MCF 10A (cell line): ENCODE measurements at regions of chr10 and their contacts with region 1.

Region 1: DNA sequence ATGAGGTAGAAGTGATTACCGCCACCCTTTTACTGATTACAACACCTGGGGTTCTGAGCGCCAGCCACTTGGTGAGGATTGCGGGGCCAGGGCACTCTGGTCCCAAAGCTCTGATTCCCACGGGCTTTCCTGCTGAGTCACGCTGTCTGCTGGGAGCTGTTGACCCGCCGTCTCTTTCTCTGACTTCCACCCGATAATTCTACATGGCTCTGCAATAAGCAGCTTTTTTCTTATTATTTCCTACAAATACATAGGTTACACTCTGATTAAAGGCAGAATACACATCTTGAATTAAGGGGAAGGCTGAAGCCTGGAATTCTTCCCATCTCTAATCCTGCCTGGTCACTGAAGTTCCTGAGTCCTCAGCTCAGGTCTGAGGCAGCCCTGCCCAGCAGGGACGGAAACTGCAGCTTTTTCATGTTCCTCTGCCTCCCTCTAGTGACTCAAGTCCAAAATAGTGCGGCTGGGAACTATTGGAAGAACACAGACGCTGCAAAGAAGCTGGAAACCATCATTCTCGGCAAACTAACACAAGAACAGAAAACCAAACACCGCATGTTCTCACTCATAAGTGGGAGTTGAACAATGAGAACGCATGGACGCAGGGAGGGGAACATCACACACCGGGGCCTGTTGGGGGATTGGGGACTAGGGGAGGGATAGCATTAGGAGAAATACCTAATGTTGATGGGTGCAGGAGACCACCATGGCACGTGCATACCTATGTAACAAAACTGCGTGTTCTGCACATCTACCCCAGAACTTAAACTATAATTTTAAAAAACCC is 178.3 kb downstream of the PRKCQ start:
- DNase-seq: peak; percentile 90
- H3K4me3 Mint-ChIP-seq: peak overlapping the region; percentile 73
- H3K27ac Mint-ChIP-seq: peak overlapping the region; percentile 63
- H3K4me1 Mint-ChIP-seq: peaks cover 25% of the 10 kb centered on the region
- H3K27me3 Mint-ChIP-seq: peaks cover 30% of the 10 kb centered on the region
- CTCF ChIP-seq: peak; percentile 72

Region 2: DNA sequence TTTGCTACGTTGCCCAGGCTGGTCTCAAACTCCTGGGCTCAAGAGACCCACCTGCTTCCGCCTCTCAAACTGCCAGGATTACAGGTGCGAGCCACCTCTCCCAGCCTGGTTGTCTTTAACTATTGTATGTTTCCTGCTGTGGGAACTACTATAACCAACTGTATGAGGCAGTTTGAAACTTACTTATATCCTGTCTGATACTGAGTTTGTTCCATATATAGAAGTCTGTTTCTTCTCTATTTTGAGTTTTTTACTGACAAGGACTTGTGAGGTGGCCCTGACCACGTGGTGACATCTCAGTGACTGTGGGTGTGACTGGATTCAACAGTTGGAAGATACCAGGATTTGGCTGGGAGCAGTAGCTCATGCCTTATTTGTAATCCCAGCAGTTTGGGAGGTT is 497.5 kb before region 1 on chr10:
- CTCF ChIA-PET with region 1: no interaction called
- POLR2A ChIA-PET with region 1: no interaction called
- intact Hi-C with region 1: no loop called
- DNase-seq: no peak
- H3K4me3 Mint-ChIP-seq: no peak overlapping the region
- H3K27ac Mint-ChIP-seq: no peak overlapping the region
- H3K4me1 Mint-ChIP-seq: peaks cover 5% of the 10 kb centered on the region
- H3K27me3 Mint-ChIP-seq: no peaks in the 10 kb centered on the region
- CTCF ChIP-seq: no peak

Region 3: DNA sequence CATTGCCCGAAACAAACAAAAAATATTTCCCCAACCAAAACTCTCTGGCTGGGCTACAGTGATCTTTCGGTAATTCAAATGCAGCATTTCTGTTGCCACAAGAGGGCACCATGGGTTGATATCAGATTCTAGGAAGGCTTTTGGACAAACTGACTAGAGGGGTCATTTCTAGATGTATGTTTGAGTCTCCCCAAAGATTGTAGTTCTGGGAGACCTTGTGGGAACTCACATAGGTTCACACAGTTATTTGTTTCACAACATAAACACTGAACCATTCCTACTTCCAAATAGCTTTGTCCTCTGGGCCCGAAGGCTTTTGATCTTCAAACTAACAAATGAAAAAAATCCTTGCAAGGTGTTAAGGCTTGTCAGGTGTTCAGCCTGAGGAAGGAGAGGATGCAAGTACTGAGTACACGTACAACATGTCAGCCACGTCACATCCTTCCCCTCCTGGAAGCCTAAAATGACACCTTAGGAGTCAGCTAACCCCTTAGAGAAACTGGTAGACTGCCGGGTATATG is 387.5 kb before region 1 on chr10:
- CTCF ChIA-PET with region 1: interaction called, 10 read pairs
- POLR2A ChIA-PET with region 1: no interaction called
- intact Hi-C with region 1: loop called (anchors 1 kb)
- DNase-seq: peak; percentile 64
- H3K4me3 Mint-ChIP-seq: no peak overlapping the region
- H3K27ac Mint-ChIP-seq: no peak overlapping the region
- H3K4me1 Mint-ChIP-seq: no peaks in the 10 kb centered on the region
- H3K27me3 Mint-ChIP-seq: peaks cover 11% of the 10 kb centered on the region
- CTCF ChIP-seq: peak; percentile 58

Region 4: DNA sequence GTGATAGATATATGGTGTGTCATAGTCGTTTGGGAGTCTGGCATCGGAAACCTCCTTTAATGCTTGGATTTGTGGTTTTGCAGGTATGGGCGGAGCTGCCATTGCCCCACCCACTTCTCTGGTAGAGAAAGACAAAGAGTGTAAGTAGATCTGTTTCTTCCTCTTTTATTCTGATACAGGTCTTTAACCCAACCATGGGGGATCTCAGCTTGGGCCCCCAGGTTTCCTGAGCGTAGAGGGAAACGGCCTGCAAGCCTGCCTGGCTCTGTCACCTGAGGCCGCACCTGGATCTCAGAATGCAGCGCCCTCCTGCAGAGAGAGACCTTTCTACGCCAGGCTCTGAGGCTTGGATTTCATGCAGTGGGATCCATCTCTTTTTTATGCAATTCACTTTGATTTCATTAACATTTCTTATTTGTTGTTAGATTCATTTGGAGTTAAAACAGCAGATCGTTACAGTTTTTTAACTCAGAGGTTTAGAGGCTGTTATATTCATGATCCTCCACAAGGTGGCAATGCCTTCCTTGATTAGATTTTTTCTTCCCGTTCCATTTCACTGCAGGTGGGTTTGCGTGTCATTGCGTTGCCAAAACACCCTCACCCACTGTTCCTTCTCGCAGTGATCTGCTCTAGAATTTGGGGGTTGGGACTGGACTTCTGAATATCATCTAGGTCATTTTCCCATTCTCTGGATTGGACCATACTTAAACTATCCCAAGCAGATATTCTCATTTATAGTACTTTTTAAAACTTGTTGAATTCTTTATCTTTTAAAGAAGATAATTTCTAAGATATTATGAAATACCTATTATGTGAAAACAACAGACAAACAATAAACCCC is 292.9 kb before region 1 on chr10:
- CTCF ChIA-PET with region 1: interaction called, 80 read pairs
- POLR2A ChIA-PET with region 1: interaction called, 5 read pairs
- intact Hi-C with region 1: loop called (anchors 1 kb)
- DNase-seq: peak; percentile 51
- H3K4me3 Mint-ChIP-seq: no peak overlapping the region
- H3K27ac Mint-ChIP-seq: no peak overlapping the region
- H3K4me1 Mint-ChIP-seq: peaks cover 11% of the 10 kb centered on the region
- H3K27me3 Mint-ChIP-seq: no peaks in the 10 kb centered on the region
- CTCF ChIP-seq: peak; percentile 76

Region 5: DNA sequence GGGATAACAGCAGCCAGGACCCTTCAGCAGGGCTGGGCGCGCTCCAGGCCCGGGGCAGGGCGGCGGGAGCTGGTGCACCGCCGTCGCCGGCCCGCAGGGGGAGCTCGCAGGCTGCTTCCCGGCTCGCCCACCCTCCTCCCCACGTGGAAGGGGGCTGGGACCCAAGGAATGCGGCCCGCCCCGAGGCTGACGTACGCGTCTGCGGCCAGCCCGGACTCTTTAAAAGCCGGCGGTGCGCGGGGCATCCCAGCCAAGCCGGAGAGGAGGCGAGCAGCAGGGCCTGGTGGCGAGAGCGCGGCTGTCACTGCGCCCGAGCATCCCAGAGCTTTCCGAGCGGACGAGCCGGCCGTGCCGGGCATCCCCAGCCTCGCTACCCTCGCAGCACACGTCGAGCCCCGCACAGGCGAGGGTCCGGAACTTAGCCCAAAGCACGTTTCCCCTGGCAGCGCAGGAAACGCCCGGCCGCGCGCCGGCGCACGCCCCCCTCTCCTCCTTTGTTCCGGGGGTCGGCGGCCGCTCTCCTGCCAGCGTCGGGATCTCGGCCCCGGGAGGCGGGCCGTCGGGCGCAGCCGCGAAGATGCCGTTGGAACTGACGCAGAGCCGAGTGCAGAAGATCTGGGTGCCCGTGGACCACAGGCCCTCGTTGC is 198.9 kb before region 1 on chr10 and contains the start of gene PFKFB3:
- CTCF ChIA-PET with region 1: interaction called, 114 read pairs
- POLR2A ChIA-PET with region 1: interaction called, 100 read pairs
- intact Hi-C with region 1: loop called (anchors 1 kb)
- DNase-seq: peak; percentile 94
- H3K4me3 Mint-ChIP-seq: peak within 1 kb of the TSS; percentile 94
- H3K27ac Mint-ChIP-seq: no peak within 1 kb of the TSS
- H3K4me1 Mint-ChIP-seq: peaks cover 19% of the 10 kb centered on the region
- H3K27me3 Mint-ChIP-seq: no peaks in the 10 kb centered on the region
- CTCF ChIP-seq: peak; percentile 96
- total RNA-seq, gene PFKFB3: 15.8 and 17.8 TPM in 2 replicates

Region 6: DNA sequence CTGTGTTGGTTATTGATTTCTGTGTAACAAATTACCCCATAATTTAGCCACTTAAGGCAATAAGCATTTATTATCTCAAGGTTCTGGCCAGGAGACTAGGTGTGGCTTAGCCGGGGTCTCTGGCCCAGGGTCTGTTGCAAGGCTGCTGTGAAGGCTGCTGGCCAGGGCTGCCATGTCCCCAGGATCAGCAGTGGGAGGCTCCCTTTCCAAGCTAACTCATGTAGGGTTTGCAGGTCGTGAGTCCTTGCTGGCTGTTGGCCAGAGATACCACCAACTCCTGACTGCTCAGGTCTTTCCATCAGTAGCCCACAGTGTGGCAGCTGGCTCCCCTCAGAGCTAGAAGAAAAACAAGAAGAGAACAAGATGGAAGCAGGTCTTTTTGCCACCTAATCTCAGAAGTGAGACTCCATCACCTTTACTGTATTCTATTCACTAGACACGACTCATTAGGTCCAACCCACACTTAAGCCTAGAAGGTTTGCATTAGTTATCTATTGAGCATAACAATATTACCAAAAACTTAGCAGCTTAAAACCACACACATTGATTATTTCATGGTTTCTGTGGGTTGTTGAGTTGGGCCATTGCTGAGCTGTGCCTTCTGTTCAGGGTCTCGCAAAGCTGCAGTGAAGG is 13.4 kb before region 1 on chr10:
- CTCF ChIA-PET with region 1: interaction called, 19 read pairs
- POLR2A ChIA-PET with region 1: no interaction called
- intact Hi-C with region 1: no loop called
- DNase-seq: no peak
- H3K4me3 Mint-ChIP-seq: no peak overlapping the region
- H3K27ac Mint-ChIP-seq: no peak overlapping the region
- H3K4me1 Mint-ChIP-seq: peaks cover 7% of the 10 kb centered on the region
- H3K27me3 Mint-ChIP-seq: no peaks in the 10 kb centered on the region
- CTCF ChIP-seq: no peak